Lower leg skin (tissue), 4 donors: ENCODE measurements at regions of chr5 and their contacts with region 1.

Region 1: DNA sequence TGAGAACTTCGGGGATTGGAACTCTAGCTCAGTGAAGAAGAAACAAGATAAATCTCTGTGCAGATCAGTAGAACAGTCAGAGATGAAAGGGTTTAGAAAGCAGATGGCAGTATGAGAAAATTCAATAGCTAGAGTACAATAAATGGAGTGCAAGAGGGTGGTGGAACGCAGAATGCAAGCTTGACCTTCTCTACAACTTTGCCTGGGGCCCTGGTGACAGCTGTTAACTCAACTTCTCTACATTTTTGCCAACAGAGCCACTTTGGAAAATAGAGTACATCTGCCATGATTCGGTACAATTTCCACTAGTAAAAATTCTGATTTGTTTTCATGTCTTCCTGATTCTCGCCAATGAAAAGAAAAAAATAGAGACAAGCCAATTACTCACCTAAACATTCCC is 175.7 kb downstream of the SNCAIP start:
- DNase-seq: no peak
- H3K4me3 ChIP-seq: no peak overlapping the region
- CTCF ChIP-seq: no peak
- POLR2A ChIP-seq: no peak

Region 2: GRCh38 chr5:121816164-121816563 is 671.6 kb before region 1 on chr5:
- intact Hi-C with region 1: no loop called
- DNase-seq: no peak
- H3K4me3 ChIP-seq: no peak overlapping the region
- CTCF ChIP-seq: no peak
- POLR2A ChIP-seq: no peak

Region 3: GRCh38 chr5:124410539-124411488 is 1923.1 kb after region 1 on chr5:
- intact Hi-C with region 1: loop called (anchors 5 kb)
- DNase-seq: no peak
- H3K4me3 ChIP-seq: no peak overlapping the region
- CTCF ChIP-seq: no peak
- POLR2A ChIP-seq: no peak